ENCODE measurements at regions of chr15 and their contacts with region 1.

Region 1: DNA sequence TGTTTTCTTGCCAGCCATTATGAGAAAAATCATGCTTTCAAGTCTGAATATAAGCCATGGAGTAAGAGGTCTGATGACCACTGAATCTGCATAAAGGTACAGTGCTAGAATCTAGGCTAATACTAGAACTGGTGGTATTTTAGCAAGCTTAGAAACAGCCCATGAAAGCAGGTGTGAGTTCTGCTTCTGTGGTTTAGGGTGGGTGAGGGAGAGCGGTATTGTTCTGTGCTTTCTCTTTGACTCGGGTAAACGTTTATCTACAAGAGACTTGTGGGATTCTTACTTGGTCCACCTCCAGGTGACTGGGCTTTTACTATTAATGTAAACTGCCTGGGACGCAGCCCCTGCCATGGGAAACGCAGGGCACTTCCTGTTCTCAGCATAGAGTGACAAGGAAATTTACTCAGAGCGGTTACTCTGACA is 55.2 kb downstream of the PGPEP1L start:
- DNase-seq: no peak
- H3K4me3 Mint-ChIP-seq: peak overlapping the region; percentile 10
- H3K27ac Mint-ChIP-seq: peak overlapping the region; percentile 69
- H3K4me1 Mint-ChIP-seq: peaks cover 19% of the 10 kb centered on the region
- H3K27me3 Mint-ChIP-seq: no peaks in the 10 kb centered on the region

Region 2: DNA sequence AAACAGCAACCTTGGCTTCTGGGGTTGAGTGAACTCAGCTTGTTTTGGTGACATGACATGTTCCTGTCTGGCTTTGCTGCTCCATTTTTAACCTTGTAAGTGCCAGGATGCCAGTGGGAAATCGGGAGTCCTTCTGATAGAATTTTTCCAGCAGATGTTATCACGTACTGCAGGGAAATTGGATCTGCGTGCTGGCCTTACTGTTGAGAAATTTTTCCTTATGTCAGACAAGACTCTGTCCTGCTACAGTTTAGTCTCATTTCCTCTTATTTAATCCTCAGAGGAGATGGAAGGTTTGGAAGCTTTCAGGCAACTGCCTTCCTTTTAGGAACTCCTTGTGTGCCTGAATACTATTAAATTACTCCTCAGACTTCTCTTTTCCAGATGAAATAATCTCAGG is 25.4 kb before region 1 on chr15:
- intact Hi-C with region 1: no loop called
- DNase-seq: no peak
- H3K4me3 Mint-ChIP-seq: no peak overlapping the region
- H3K27ac Mint-ChIP-seq: no peak overlapping the region
- H3K4me1 Mint-ChIP-seq: no peaks in the 10 kb centered on the region
- H3K27me3 Mint-ChIP-seq: no peaks in the 10 kb centered on the region

Region 3: GRCh38 chr15:98937413-98938104 is 14.8 kb before region 1 on chr15:
- intact Hi-C with region 1: loop called (anchors 2 kb)
- DNase-seq: no peak
- H3K4me3 Mint-ChIP-seq: no peak overlapping the region
- H3K27ac Mint-ChIP-seq: peak overlapping the region; percentile 43
- H3K4me1 Mint-ChIP-seq: peaks cover 9% of the 10 kb centered on the region
- H3K27me3 Mint-ChIP-seq: no peaks in the 10 kb centered on the region

Region 4: GRCh38 chr15:99073008-99073717 is 120.8 kb after region 1 on chr15:
- intact Hi-C with region 1: no loop called
- DNase-seq: no peak
- H3K4me3 Mint-ChIP-seq: no peak overlapping the region
- H3K27ac Mint-ChIP-seq: no peak overlapping the region
- H3K4me1 Mint-ChIP-seq: peaks cover 2% of the 10 kb centered on the region
- H3K27me3 Mint-ChIP-seq: peaks cover 3% of the 10 kb centered on the region